ENCODE measurements at regions of chr14 and their contacts with region 1.

Region 1: GRCh38 chr14:76784266-76785264 is 23.3 kb downstream of the VASH1 start:
- DNase-seq: peak; percentile 80 to 88 (median 83)
- H3K4me3 ChIP-seq: no peak overlapping the region
- H3K4me3 Mint-ChIP-seq: no peak overlapping the region
- H3K27ac ChIP-seq: no peak overlapping the region
- H3K27ac Mint-ChIP-seq: peak overlapping the region in 4 of 7 donors; percentile 47 to 75 (median 52)
- H3K4me1 ChIP-seq: peaks cover 10 to 12% of the 10 kb centered on the region in 2 donors
- H3K4me1 Mint-ChIP-seq: peaks cover 33% of the 10 kb centered on the region
- H3K27me3 ChIP-seq: no peaks in the 10 kb centered on the region
- H3K27me3 Mint-ChIP-seq: no peaks in the 10 kb centered on the region
- CTCF ChIP-seq: peak; percentile 93

Region 2: GRCh38 chr14:76710056-76711010 is 74.2 kb before region 1 on chr14:
- intact Hi-C with region 1: loop called (anchors 1 to 2 kb)
- DNase-seq: peak; percentile 44 to 80 (median 53)
- H3K4me3 ChIP-seq: no peak overlapping the region
- H3K4me3 Mint-ChIP-seq: no peak overlapping the region
- H3K27ac ChIP-seq: no peak overlapping the region
- H3K27ac Mint-ChIP-seq: peak overlapping the region in 2 of 7 donors; percentile 8 to 46
- H3K4me1 ChIP-seq: no peaks in the 10 kb centered on the region
- H3K4me1 Mint-ChIP-seq: peaks cover 20% of the 10 kb centered on the region
- H3K27me3 ChIP-seq: no peaks in the 10 kb centered on the region
- H3K27me3 Mint-ChIP-seq: peaks cover 0 to 6% (median 3%) of the 10 kb centered on the region in 3 donors
- CTCF ChIP-seq: peak; percentile 76

Region 3: GRCh38 chr14:76726551-76726970 is 58.0 kb before region 1 on chr14:
- intact Hi-C with region 1: no loop called
- DNase-seq: no peak
- H3K4me3 ChIP-seq: no peak overlapping the region
- H3K4me3 Mint-ChIP-seq: peak overlapping the region in 1 of 2 donors; percentile 67
- H3K27ac ChIP-seq: no peak overlapping the region
- H3K27ac Mint-ChIP-seq: peak overlapping the region in 4 of 7 donors; percentile 0 to 63 (median 59)
- H3K4me1 ChIP-seq: peaks cover 61 to 63% of the 10 kb centered on the region in 2 donors
- H3K4me1 Mint-ChIP-seq: peaks cover 73% of the 10 kb centered on the region
- H3K27me3 ChIP-seq: no peaks in the 10 kb centered on the region
- H3K27me3 Mint-ChIP-seq: no peaks in the 10 kb centered on the region
- CTCF ChIP-seq: no peak

Region 4: DNA sequence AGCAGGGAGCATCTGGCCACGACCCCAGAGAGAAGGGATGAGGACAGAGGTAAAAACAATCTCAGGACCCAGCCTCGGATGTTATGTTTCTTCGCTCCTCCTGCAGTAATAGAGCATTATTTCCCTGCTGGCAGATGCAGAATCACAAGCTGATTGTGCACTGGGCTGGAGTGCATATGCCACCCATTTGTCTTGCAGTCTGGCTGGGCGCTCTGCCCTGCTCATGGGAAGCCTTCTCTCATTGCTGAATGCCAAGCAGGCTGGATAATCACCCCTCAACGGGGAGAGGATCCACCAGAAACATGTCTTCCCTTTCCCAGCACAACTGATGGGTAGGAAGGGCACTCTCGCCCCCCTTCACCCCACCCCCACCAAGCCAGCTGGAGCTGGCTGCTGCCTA is 31.8 kb before region 1 on chr14:
- intact Hi-C with region 1: no loop called
- DNase-seq: no peak
- H3K4me3 ChIP-seq: no peak overlapping the region
- H3K4me3 Mint-ChIP-seq: no peak overlapping the region
- H3K27ac ChIP-seq: no peak overlapping the region
- H3K27ac Mint-ChIP-seq: no peak overlapping the region
- H3K4me1 ChIP-seq: peaks cover 0 to 7% of the 10 kb centered on the region in 2 donors
- H3K4me1 Mint-ChIP-seq: peaks cover 13% of the 10 kb centered on the region
- H3K27me3 ChIP-seq: no peaks in the 10 kb centered on the region
- H3K27me3 Mint-ChIP-seq: peaks cover 5 to 10% (median 9%) of the 10 kb centered on the region in 3 donors
- CTCF ChIP-seq: no peak

Region 5: DNA sequence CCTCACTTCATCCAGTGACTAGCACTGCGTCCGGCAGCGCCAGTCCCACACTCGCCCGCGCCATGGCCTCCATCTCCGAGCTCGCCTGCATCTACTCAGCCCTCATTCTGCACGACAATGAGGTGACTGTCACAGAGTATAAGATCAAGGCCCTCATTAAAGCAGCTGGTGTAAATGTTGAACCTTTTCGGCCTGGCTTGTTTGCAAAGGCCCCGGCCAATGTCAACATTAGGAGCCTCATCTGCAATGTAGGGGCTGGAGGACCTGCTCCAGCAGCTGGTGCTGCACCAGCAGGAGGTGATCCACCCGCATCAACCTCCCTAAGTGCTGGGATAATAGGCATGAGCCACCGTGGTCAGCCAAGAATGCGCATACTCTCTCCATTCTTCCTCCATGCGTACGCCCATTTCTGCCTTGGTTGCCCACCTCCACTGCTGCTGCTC is 184.1 kb after region 1 on chr14:
- intact Hi-C with region 1: no loop called
- DNase-seq: no peak
- H3K4me3 ChIP-seq: no peak overlapping the region
- H3K4me3 Mint-ChIP-seq: no peak overlapping the region
- H3K27ac ChIP-seq: no peak overlapping the region
- H3K27ac Mint-ChIP-seq: peak overlapping the region in 1 of 7 donors; percentile 27
- H3K4me1 ChIP-seq: no peaks in the 10 kb centered on the region
- H3K4me1 Mint-ChIP-seq: no peaks in the 10 kb centered on the region
- H3K27me3 ChIP-seq: no peaks in the 10 kb centered on the region
- H3K27me3 Mint-ChIP-seq: peaks cover 0 to 11% (median 3%) of the 10 kb centered on the region in 3 donors
- CTCF ChIP-seq: no peak

Measured in CD14-positive monocyte (primary cell).